ENCODE measurements at regions of chr2 and their contacts with region 1.

Region 1: DNA sequence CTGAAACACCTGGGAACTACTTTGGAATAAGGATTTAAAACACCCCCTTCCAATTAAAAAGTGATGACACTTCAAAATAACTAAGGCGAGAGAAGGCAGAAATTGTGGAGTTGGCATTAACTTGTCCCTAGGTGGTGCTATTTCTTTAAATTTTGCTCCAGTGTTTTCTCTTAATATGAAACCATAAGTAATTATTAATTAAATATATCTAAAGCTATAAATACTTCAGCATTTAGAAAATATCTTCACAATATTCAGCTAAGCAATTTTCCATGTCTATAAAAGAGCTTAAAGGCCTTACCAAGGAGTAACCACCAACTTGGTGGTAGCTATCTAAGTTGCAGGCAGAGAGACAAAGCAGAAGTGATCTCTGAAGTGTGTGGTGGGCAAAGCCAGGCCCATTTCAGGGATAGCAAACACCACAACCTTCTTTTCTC is 186.8 kb upstream of the PGAP1 start:
- DNase-seq: no peak
- H3K4me3 ChIP-seq: no peak overlapping the region
- H3K27ac ChIP-seq: no peak overlapping the region
- H3K4me1 ChIP-seq: peaks cover 10 to 19% of the 10 kb centered on the region in 2 donors
- H3K27me3 ChIP-seq: no peaks in the 10 kb centered on the region
- CTCF ChIP-seq: peak; percentile 48 to 77 (median 62)
- POLR2A ChIP-seq: no peak

Region 2: DNA sequence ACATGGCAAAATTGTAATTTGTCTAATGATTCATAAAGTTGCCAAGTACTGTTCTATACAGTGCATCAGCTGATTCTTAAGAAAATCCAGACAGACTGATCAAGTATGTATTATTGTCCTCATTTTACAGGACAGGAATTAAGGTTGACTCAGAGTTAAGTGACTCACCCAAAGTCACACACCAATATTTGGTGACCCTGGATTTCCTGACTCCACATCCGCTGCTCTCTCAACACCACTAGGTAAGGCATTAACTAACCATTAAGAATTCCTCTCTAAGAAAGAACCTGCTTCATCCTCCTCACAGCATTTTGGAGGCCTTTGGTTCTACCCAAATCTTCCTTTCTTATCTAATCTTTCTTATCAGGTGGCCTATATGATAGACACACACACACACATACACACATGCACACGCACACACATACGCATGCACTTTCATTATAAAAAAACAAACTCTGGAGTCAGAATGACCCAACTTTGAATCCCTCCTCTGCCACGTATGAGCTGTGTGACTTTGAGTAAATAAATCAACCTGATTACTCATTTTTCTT is 46.4 kb after region 1 on chr2:
- intact Hi-C with region 1: loop called in 1 of 2 experiments (anchors 5 kb)
- DNase-seq: peak in 5 of 7 donors; percentile 44 to 59 (median 56)
- H3K4me3 ChIP-seq: no peak overlapping the region
- H3K27ac ChIP-seq: peak overlapping the region; percentile 33 to 83 (median 72)
- H3K4me1 ChIP-seq: peaks cover 23 to 29% of the 10 kb centered on the region in 2 donors
- H3K27me3 ChIP-seq: no peaks in the 10 kb centered on the region
- CTCF ChIP-seq: no peak
- POLR2A ChIP-seq: no peak

Region 3: GRCh38 chr2:197310271-197310985 is 197.1 kb after region 1 on chr2 and contains the start of gene ANKRD44:
- intact Hi-C with region 1: loop called (anchors 5 to 10 kb)
- DNase-seq: peak; percentile 92 to 96 (median 95)
- H3K4me3 ChIP-seq: peak within 1 kb of the TSS; percentile 1 to 90 (median 56)
- H3K27ac ChIP-seq: peak within 1 kb of the TSS in 3 of 5 donors; percentile 79 to 96 (median 82)
- H3K4me1 ChIP-seq: peaks cover 9 to 37% of the 10 kb centered on the region in 2 donors
- H3K27me3 ChIP-seq: no peaks in the 10 kb centered on the region
- CTCF ChIP-seq: peak in 5 of 6 experiments; percentile 40 to 94 (median 56)
- POLR2A ChIP-seq: peak in 1 of 2 donors; percentile 89
- total RNA-seq, gene ANKRD44: 12.9 to 40.2 (median 27.0) TPM

Region 4: DNA sequence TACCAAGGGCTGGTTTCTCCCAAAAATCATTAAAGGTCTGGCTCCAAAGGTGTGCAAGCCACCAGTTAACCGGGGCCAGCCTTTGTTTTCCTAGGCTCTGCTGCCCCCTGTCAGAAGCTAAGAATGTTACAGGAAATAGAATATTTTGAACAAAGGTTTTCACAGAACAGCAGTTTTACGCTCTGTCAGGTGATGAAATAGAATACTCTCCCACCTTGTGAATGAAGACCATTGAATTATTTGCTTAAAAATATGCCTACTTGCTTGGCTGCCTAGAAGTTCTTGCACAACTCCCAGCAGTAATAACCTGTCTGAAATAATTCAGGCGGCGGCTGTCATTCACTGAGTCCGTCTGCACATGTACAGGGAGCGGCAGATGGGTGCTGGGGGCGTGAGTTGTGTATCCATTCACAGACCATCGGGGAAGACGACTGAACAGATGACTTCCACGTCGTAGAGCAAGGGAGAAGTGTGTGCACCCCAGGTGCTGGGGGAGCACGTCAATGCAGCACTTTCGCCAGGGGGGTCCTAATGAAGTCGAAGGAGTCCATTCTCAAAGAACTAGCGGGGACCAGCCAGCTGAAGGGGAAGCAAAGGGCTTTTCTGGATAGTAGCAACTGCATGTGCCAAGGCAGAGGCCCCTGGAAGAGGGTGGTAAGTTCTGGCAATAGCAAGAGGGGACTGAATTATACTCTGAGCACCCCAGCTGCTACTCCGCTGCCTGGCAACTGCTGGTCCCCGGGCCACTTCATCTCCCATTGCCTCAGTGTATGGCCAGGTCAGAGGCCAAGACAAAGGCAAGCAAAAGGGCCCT is 265.4 kb after region 1 on chr2:
- intact Hi-C with region 1: loop called (anchors 10 kb)
- DNase-seq: peak; percentile 23 to 61 (median 40)
- H3K4me3 ChIP-seq: no peak overlapping the region
- H3K27ac ChIP-seq: no peak overlapping the region
- H3K4me1 ChIP-seq: no peaks in the 10 kb centered on the region
- H3K27me3 ChIP-seq: no peaks in the 10 kb centered on the region
- CTCF ChIP-seq: peak; percentile 43 to 84 (median 79)
- POLR2A ChIP-seq: no peak

Region 5: GRCh38 chr2:197383823-197384222 is 270.5 kb after region 1 on chr2:
- intact Hi-C with region 1: loop called (anchors 10 kb)
- DNase-seq: no peak
- H3K4me3 ChIP-seq: no peak overlapping the region
- H3K27ac ChIP-seq: no peak overlapping the region
- H3K4me1 ChIP-seq: no peaks in the 10 kb centered on the region
- H3K27me3 ChIP-seq: no peaks in the 10 kb centered on the region
- CTCF ChIP-seq: no peak
- POLR2A ChIP-seq: no peak

Region 6: GRCh38 chr2:198441246-198441645 is 1328.0 kb after region 1 on chr2:
- intact Hi-C with region 1: no loop called
- DNase-seq: no peak
- H3K4me3 ChIP-seq: no peak overlapping the region
- H3K27ac ChIP-seq: no peak overlapping the region
- H3K4me1 ChIP-seq: no peaks in the 10 kb centered on the region
- H3K27me3 ChIP-seq: no peaks in the 10 kb centered on the region
- CTCF ChIP-seq: no peak
- POLR2A ChIP-seq: no peak

Measured in adrenal gland (tissue), 19 donors.